ENCODE measurements at regions of chr12 and their contacts with region 1.

Region 1: DNA sequence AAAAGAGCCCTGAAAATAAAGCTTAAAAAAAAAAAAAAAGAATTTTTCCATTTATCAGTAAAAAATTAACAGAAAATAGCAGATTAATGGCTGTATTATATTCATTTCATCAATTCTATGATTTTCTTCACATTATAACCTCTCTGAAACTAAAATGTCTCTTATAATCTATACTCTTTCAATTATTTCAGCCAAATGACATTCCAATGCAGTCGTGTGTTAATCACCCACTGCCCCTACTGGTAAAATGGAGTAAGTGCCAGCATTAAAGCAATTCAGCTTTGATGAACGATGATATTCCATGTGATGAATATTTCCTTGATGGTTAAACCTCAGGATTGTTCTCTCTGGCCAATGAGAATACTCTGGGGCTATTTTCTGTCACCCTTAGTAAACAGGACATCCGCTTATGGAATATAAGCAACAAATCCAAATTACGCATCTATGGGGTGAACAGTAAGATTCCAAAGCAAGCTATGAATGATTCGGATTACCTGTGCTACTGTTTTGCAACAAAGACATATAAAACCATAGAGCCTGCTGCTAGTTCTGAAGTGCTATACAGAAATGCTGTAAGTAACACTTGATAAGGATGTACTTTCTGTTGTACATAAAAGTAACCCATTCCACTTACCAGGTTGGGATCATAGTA is 20.3 kb upstream of the SYCP3 start:
- DNase-seq: peak; percentile 22 to 49 (median 29)
- H3K4me3 ChIP-seq: no peak overlapping the region
- H3K4me3 Mint-ChIP-seq: no peak overlapping the region
- H3K27ac ChIP-seq: no peak overlapping the region
- H3K27ac Mint-ChIP-seq: no peak overlapping the region
- H3K4me1 ChIP-seq: no peaks in the 10 kb centered on the region
- H3K4me1 Mint-ChIP-seq: peaks cover 0 to 3% (median 1%) of the 10 kb centered on the region in 4 donors
- H3K27me3 ChIP-seq: no peaks in the 10 kb centered on the region
- H3K27me3 Mint-ChIP-seq: no peaks in the 10 kb centered on the region

Region 2: GRCh38 chr12:101414533-101415119 is 344.9 kb before region 1 on chr12:
- CTCF ChIA-PET with region 1: interaction called, 9 read pairs
- POLR2A ChIA-PET with region 1: no interaction called
- intact Hi-C with region 1: loop called (anchors 1 kb)
- DNase-seq: peak; percentile 3 to 32 (median 21)
- H3K4me3 ChIP-seq: no peak overlapping the region
- H3K4me3 Mint-ChIP-seq: no peak overlapping the region
- H3K27ac ChIP-seq: no peak overlapping the region
- H3K27ac Mint-ChIP-seq: no peak overlapping the region
- H3K4me1 ChIP-seq: no peaks in the 10 kb centered on the region
- H3K4me1 Mint-ChIP-seq: no peaks in the 10 kb centered on the region
- H3K27me3 ChIP-seq: no peaks in the 10 kb centered on the region
- H3K27me3 Mint-ChIP-seq: peaks cover 0 to 1% of the 10 kb centered on the region in 2 donors

Region 3: DNA sequence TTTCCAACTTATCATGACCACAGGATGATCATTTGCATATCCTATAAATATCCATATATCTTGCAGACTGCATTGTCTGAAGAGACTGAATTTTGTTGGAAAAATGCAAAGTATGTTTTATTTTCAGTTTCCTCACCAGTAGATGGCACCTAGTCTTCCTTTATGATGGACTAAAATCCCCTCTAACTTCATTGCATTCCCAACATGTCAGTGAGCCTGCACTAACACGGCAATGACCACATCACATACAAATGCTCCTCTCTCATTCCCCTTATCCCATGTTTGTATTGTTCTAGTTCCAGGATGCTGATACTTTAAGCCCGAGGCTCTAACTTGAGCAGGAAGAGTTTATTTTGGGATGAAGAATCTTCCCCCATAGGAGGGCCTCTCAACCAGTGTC is 189.5 kb before region 1 on chr12:
- CTCF ChIA-PET with region 1: interaction called, 3 read pairs
- POLR2A ChIA-PET with region 1: no interaction called
- intact Hi-C with region 1: loop called (anchors 2 kb)
- DNase-seq: no peak
- H3K4me3 ChIP-seq: no peak overlapping the region
- H3K4me3 Mint-ChIP-seq: no peak overlapping the region
- H3K27ac ChIP-seq: no peak overlapping the region
- H3K27ac Mint-ChIP-seq: no peak overlapping the region
- H3K4me1 ChIP-seq: no peaks in the 10 kb centered on the region
- H3K4me1 Mint-ChIP-seq: peaks cover 0 to 4% (median under 1%) of the 10 kb centered on the region in 4 donors
- H3K27me3 ChIP-seq: no peaks in the 10 kb centered on the region
- H3K27me3 Mint-ChIP-seq: peaks cover 5 to 9% of the 10 kb centered on the region in 2 donors

Region 4: GRCh38 chr12:101670007-101670687 is 89.4 kb before region 1 on chr12:
- CTCF ChIA-PET with region 1: interaction called, 16 read pairs
- POLR2A ChIA-PET with region 1: no interaction called
- intact Hi-C with region 1: loop called (anchors 1 kb)
- DNase-seq: peak; percentile 37 to 67 (median 47)
- H3K4me3 ChIP-seq: no peak overlapping the region
- H3K4me3 Mint-ChIP-seq: peak overlapping the region in 1 of 8 donors; percentile 80
- H3K27ac ChIP-seq: no peak overlapping the region
- H3K27ac Mint-ChIP-seq: peak overlapping the region in 3 of 7 donors; percentile 4 to 66 (median 24)
- H3K4me1 ChIP-seq: peaks cover 21% of the 10 kb centered on the region
- H3K4me1 Mint-ChIP-seq: peaks cover 14 to 28% (median 21%) of the 10 kb centered on the region in 4 donors
- H3K27me3 ChIP-seq: no peaks in the 10 kb centered on the region
- H3K27me3 Mint-ChIP-seq: peaks cover 0 to 7% of the 10 kb centered on the region in 2 donors